Ascending aorta (tissue), 2 donors: ENCODE measurements at regions of chrX and their contacts with region 1.

Region 1: GRCh38 chrX:136179133-136179532 is 31.8 kb downstream of the FHL1 start:
- DNase-seq: no peak
- H3K4me3 ChIP-seq: no peak overlapping the region
- H3K27ac ChIP-seq: peak overlapping the region; percentile 45 to 48
- H3K4me1 ChIP-seq: peaks cover 0 to 46% of the 10 kb centered on the region in 2 donors
- H3K27me3 ChIP-seq: no peaks in the 10 kb centered on the region
- CTCF ChIP-seq: no peak

Region 2: GRCh38 chrX:136086521-136086920 is 92.6 kb before region 1 on chrX:
- intact Hi-C with region 1: no loop called
- DNase-seq: no peak
- H3K4me3 ChIP-seq: no peak overlapping the region
- H3K27ac ChIP-seq: no peak overlapping the region
- H3K4me1 ChIP-seq: no peaks in the 10 kb centered on the region
- H3K27me3 ChIP-seq: no peaks in the 10 kb centered on the region
- CTCF ChIP-seq: no peak

Region 3: GRCh38 chrX:136115126-136115903 is 63.8 kb before region 1 on chrX:
- intact Hi-C with region 1: no loop called
- DNase-seq: no peak
- H3K4me3 ChIP-seq: no peak overlapping the region
- H3K27ac ChIP-seq: peak overlapping the region; percentile 33 to 65
- H3K4me1 ChIP-seq: peaks cover 0 to 9% of the 10 kb centered on the region in 2 donors
- H3K27me3 ChIP-seq: no peaks in the 10 kb centered on the region
- CTCF ChIP-seq: no peak

Region 4: DNA sequence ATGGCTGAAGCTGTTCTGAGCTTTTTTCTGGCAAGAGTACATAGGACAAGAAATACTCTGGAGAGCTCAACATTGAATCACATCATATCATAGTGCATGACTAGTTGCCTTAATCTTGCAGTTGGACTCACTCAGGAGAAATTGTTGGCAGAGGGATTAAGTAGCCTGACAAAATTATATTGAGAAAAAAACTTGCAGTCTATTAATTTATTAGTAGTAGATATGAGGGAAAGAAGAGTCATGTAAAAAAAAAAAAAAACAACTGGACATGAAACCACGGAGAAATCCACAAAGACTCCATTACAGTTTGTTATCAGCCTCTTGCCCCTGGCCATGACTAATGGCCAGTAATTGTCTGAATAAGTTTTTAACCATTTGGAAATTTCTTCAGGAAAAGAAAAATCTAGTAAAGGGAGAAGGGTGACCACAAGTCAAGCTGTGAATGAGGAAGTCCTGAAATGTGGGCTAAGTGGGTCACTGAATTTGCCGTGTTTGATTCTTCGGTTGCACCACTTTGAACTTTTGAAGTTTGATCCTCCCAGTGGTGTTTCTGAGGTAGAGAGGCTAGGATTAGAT is 13.8 kb after region 1 on chrX:
- intact Hi-C with region 1: loop called (anchors 2 kb)
- DNase-seq: no peak
- H3K4me3 ChIP-seq: no peak overlapping the region
- H3K27ac ChIP-seq: peak overlapping the region; percentile 65 to 66
- H3K4me1 ChIP-seq: peaks cover 0 to 34% of the 10 kb centered on the region in 2 donors
- H3K27me3 ChIP-seq: no peaks in the 10 kb centered on the region
- CTCF ChIP-seq: no peak

Region 5: DNA sequence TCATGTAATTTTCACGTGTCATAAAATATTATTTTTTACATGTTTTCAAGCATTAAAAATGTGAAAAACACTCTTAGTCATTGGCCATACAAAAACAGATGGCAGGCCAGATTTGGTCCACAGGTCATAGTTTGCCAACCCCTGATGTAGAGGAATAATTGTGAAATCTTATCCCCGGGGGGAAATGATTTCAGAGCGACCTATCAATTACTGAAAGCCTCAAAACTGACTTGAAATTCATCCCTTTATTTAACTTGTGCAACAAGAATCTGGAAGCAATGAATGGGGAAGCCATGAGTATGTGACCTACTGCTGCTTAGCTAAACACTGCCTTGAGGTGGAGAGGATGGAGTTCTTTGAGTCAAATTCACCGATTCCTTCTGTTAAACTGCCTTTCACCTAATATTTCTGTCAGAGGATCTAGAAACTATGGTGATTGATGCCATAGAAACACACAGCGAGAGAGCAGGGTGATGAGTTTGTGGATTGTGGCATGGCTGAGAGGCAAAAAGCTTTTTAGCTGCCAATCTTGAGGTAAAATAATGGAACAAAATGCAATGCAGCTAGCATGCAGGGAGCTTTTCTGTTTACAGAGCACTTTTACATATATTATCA is 278.3 kb after region 1 on chrX:
- intact Hi-C with region 1: no loop called
- DNase-seq: no peak
- H3K4me3 ChIP-seq: no peak overlapping the region
- H3K27ac ChIP-seq: no peak overlapping the region
- H3K4me1 ChIP-seq: no peaks in the 10 kb centered on the region
- H3K27me3 ChIP-seq: no peaks in the 10 kb centered on the region
- CTCF ChIP-seq: no peak